ENCODE measurements at regions of chr18 and their contacts with region 1.

Region 1: GRCh38 chr18:51668101-51668500 is 470.6 kb upstream of the MEX3C start:
- DNase-seq: peak in 2 of 3 donors; percentile 22 to 68
- ATAC-seq: no peak
- H3K4me3 ChIP-seq: no peak overlapping the region
- H3K27ac ChIP-seq: no peak overlapping the region
- H3K4me1 ChIP-seq: no peaks in the 10 kb centered on the region
- H3K27me3 ChIP-seq: no peaks in the 10 kb centered on the region

Region 2: GRCh38 chr18:51448949-51449348 is 219.2 kb before region 1 on chr18:
- intact Hi-C with region 1: no loop called
- DNase-seq: no peak
- ATAC-seq: peak in 1 of 2 donors; percentile 56
- H3K4me3 ChIP-seq: no peak overlapping the region
- H3K27ac ChIP-seq: no peak overlapping the region
- H3K4me1 ChIP-seq: no peaks in the 10 kb centered on the region
- H3K27me3 ChIP-seq: no peaks in the 10 kb centered on the region

Region 3: GRCh38 chr18:51545446-51545845 is 122.7 kb before region 1 on chr18:
- intact Hi-C with region 1: no loop called
- DNase-seq: no peak
- ATAC-seq: no peak
- H3K4me3 ChIP-seq: no peak overlapping the region
- H3K27ac ChIP-seq: no peak overlapping the region
- H3K4me1 ChIP-seq: no peaks in the 10 kb centered on the region
- H3K27me3 ChIP-seq: no peaks in the 10 kb centered on the region

Region 4: DNA sequence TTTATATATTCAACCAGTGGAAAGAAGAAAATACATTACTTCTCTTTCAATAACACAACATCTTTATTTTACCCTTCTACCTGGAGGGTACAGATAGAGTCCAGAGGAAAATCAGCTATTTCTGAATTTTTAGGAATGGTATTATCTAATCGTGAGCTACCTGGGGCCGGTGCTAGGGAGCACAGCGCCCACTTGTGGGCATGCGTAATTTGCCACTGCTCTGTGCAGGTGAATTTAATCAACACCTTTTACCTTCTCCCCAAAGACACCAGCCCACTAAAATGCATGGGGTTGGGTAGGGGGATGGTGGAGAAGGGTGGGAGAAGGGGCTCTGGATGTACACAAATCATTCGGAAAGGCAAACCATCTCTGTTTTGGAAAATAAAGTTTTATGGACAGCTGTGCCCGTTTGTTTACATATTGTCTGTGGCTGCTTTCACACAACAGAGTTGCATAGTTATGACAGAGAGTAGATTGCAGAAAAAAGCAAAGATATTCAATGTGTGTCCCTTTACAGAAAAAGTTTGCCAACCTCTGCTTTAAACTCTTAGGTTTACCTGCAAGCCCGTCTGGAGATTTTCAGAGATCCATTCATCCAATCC is 620.4 kb after region 1 on chr18:
- intact Hi-C with region 1: loop called in 1 of 4 experiments (anchors 5 kb)
- DNase-seq: peak in 2 of 3 donors; percentile 19 to 28
- ATAC-seq: no peak
- H3K4me3 ChIP-seq: no peak overlapping the region
- H3K27ac ChIP-seq: no peak overlapping the region
- H3K4me1 ChIP-seq: no peaks in the 10 kb centered on the region
- H3K27me3 ChIP-seq: no peaks in the 10 kb centered on the region

Measured in right cardiac atrium (tissue), 5 donors.